ENCODE measurements at regions of chr2 and their contacts with region 1.

Region 1: GRCh38 chr2:97663965-97664635 is at the start of gene ACTR1B:
- DNase-seq: peak; percentile 97 to 99
- H3K4me3 ChIP-seq: peak within 1 kb of the TSS; percentile 75
- H3K27ac ChIP-seq: peak within 1 kb of the TSS; percentile 88
- H3K4me1 ChIP-seq: peaks cover 20% of the 10 kb centered on the region
- H3K27me3 ChIP-seq: no peaks in the 10 kb centered on the region
- CTCF ChIP-seq: peak; percentile 84
- total RNA-seq, gene ACTR1B: 49.9 and 83.5 TPM in 2 replicates

Region 2: DNA sequence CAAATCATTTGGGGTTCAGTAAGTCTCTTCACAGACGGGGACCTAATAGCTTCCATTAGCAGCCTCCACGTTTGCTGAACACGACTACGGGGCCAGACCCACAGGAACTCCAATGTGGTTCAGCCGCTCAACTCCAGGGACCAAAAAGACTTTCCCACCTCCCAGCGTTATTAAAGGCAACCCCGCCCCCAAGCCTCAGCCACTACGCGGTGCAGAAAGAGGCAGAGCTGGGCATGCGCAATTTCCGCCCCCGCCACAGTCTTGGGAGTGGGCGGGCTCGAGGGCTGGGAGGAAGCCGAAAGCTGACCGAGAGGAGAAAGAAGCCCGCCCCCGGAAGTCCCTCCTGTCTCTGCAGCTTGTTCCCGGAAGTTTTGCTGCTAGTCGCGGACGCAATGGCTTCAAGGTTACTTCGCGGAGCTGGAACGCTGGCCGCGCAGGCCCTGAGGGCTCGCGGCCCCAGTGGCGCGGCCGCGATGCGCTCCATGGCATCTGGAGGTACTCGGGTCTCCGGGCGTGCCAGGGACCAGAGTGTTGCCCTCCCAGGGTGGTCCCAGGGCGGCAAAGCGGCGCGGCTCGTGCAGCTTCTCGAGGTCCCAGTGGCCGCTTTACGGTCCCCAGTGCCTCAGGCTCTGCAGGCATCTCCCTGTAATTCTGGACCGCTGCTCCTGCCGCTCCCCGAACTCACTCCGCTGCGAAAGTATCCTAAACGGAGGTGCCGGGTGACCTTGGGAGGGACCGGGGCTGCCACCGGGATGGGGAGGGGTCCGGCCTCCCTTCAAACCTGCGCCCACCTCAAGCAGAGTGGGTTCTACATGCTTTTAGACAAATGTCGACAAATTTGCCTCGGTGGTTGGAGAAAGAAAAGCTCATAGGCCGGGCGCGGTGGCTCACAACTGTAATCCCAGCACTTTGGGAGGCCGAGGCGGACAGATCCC is 18.1 kb before region 1 on chr2 and contains the start of gene COX5B:
- CTCF ChIA-PET with region 1: interaction called, 13 read pairs
- POLR2A ChIA-PET with region 1: interaction called, 67 read pairs
- intact Hi-C with region 1: loop called (anchors 1 kb)
- DNase-seq: peak; percentile 97 to 99
- H3K4me3 ChIP-seq: peak within 1 kb of the TSS; percentile 72
- H3K27ac ChIP-seq: peak within 1 kb of the TSS; percentile 53
- H3K4me1 ChIP-seq: peaks cover 10% of the 10 kb centered on the region
- H3K27me3 ChIP-seq: no peaks in the 10 kb centered on the region
- CTCF ChIP-seq: no peak
- total RNA-seq, gene COX5B: 310 and 345 TPM in 2 replicates

Region 3: DNA sequence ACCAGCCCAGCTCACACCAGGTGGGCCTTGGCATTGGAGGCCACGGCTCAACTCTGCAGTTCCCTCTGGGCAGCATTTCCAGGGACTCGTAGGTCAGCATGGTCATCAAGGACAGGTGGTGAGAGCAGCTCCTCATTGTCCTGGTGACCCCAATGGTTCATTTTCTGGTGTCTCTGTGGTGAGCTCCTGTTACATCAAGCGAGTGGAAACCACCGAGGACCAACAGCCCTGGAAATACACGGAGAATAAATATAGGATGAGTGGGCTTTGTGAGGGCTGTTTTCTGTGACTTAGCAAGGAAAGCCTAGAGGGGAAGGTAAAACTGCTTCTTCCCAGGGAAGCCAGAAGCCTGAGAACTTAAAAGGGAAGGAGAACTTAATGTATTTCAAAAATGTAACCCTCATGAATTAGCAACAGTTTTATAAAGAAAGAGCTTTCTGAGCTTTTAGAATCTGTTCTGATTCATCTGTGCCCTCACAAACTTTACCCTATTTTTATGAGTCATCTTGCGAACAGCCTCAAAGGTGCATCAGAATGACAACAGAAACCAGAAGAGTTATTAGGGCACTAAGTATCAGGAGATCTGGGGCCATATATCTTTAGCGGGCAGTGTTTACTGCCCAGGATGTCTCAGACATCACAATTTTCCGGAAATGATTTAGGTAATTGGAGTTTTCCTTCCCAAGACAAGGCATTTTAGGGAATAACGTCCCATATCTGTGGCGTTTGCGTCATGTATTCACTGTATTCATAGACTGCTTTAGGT is 24.1 kb after region 1 on chr2:
- CTCF ChIA-PET with region 1: interaction called, 6 read pairs
- POLR2A ChIA-PET with region 1: interaction called, 11 read pairs
- intact Hi-C with region 1: loop called (anchors 1 kb)
- DNase-seq: peak in 1 of 2 experiments; percentile 89
- H3K4me3 ChIP-seq: no peak overlapping the region; the same call in 1 of the 2 replicates
- H3K27ac ChIP-seq: peak overlapping the region; percentile 80
- H3K4me1 ChIP-seq: peaks cover 33% of the 10 kb centered on the region
- H3K27me3 ChIP-seq: no peaks in the 10 kb centered on the region
- CTCF ChIP-seq: no peak

Region 4: GRCh38 chr2:97966518-97967215 is 302.6 kb after region 1 on chr2:
- CTCF ChIA-PET with region 1: no interaction called
- POLR2A ChIA-PET with region 1: no interaction called
- intact Hi-C with region 1: no loop called
- DNase-seq: peak in 1 of 2 experiments; percentile 86
- H3K4me3 ChIP-seq: no peak overlapping the region
- H3K27ac ChIP-seq: peak overlapping the region; percentile 51
- H3K4me1 ChIP-seq: peaks cover 26% of the 10 kb centered on the region
- H3K27me3 ChIP-seq: no peaks in the 10 kb centered on the region
- CTCF ChIP-seq: no peak